ENCODE measurements at regions of chr7 and their contacts with region 1.

Region 1: GRCh38 chr7:150753826-150754603 is 16.8 kb downstream of the GIMAP5 start:
- DNase-seq: peak; percentile 43
- ATAC-seq: peak; percentile 69
- H3K4me3 Mint-ChIP-seq: peak overlapping the region; percentile 21
- H3K27ac Mint-ChIP-seq: peak overlapping the region; percentile 92
- H3K4me1 Mint-ChIP-seq: peaks cover 70% of the 10 kb centered on the region
- H3K27me3 Mint-ChIP-seq: no peaks in the 10 kb centered on the region

Region 2: GRCh38 chr7:150368096-150368883 is 385.7 kb before region 1 on chr7 and contains the start of gene REPIN1:
- CTCF ChIA-PET with region 1: interaction called, 3 read pairs
- POLR2A ChIA-PET with region 1: interaction called, 7 read pairs
- intact Hi-C with region 1: loop called in 1 of 2 experiments (anchors 5 kb)
- DNase-seq: peak; percentile 88
- ATAC-seq: peak; percentile 63
- H3K4me3 Mint-ChIP-seq: peak within 1 kb of the TSS; percentile 90
- H3K27ac Mint-ChIP-seq: peak within 1 kb of the TSS; percentile 97
- H3K4me1 Mint-ChIP-seq: peaks cover 37% of the 10 kb centered on the region
- H3K27me3 Mint-ChIP-seq: no peaks in the 10 kb centered on the region
- total RNA-seq, gene REPIN1: 48.2 to 55.6 TPM

Region 3: GRCh38 chr7:150448789-150449147 is 305.2 kb before region 1 on chr7:
- CTCF ChIA-PET with region 1: interaction called, 69 read pairs
- POLR2A ChIA-PET with region 1: interaction called, 15 read pairs
- intact Hi-C with region 1: loop called (anchors 1 kb)
- DNase-seq: peak; percentile 95
- ATAC-seq: peak; percentile 41
- H3K4me3 Mint-ChIP-seq: peak overlapping the region; percentile 91
- H3K27ac Mint-ChIP-seq: peak overlapping the region; percentile 96
- H3K4me1 Mint-ChIP-seq: peaks cover 51% of the 10 kb centered on the region
- H3K27me3 Mint-ChIP-seq: no peaks in the 10 kb centered on the region

Region 4: GRCh38 chr7:150567169-150567568 is 186.8 kb before region 1 on chr7 and contains the start of gene GIMAP4:
- CTCF ChIA-PET with region 1: no interaction called
- POLR2A ChIA-PET with region 1: interaction called, 4 read pairs
- intact Hi-C with region 1: loop called (anchors 2 kb)
- DNase-seq: peak; percentile 45
- ATAC-seq: peak; percentile 50
- H3K4me3 Mint-ChIP-seq: peak within 1 kb of the TSS; percentile 89
- H3K27ac Mint-ChIP-seq: peak within 1 kb of the TSS; percentile 99
- H3K4me1 Mint-ChIP-seq: peaks cover 67% of the 10 kb centered on the region
- H3K27me3 Mint-ChIP-seq: no peaks in the 10 kb centered on the region
- total RNA-seq, gene GIMAP4: 109 to 135 TPM

Region 5: GRCh38 chr7:150631866-150632864 is 121.8 kb before region 1 on chr7 and contains the start of gene GIMAP6:
- CTCF ChIA-PET with region 1: interaction called, 6 read pairs
- POLR2A ChIA-PET with region 1: no interaction called
- intact Hi-C with region 1: loop called in 1 of 2 experiments (anchors 2 kb)
- DNase-seq: peak; percentile 62
- ATAC-seq: peak; percentile 69
- H3K4me3 Mint-ChIP-seq: peak within 1 kb of the TSS; percentile 95
- H3K27ac Mint-ChIP-seq: peak within 1 kb of the TSS; percentile 97
- H3K4me1 Mint-ChIP-seq: peaks cover 65% of the 10 kb centered on the region
- H3K27me3 Mint-ChIP-seq: no peaks in the 10 kb centered on the region
- total RNA-seq, gene GIMAP6: 21.6 to 25.4 TPM

Region 6: GRCh38 chr7:150685219-150686029 is 68.6 kb before region 1 on chr7 and contains the start of gene GIMAP2:
- CTCF ChIA-PET with region 1: interaction called, 3 read pairs
- POLR2A ChIA-PET with region 1: interaction called, 3 read pairs
- intact Hi-C with region 1: loop called (anchors 1 to 2 kb)
- DNase-seq: peak; percentile 41
- ATAC-seq: peak; percentile 85
- H3K4me3 Mint-ChIP-seq: peak within 1 kb of the TSS; percentile 96
- H3K27ac Mint-ChIP-seq: peak within 1 kb of the TSS; percentile 100
- H3K4me1 Mint-ChIP-seq: peaks cover 75% of the 10 kb centered on the region
- H3K27me3 Mint-ChIP-seq: no peaks in the 10 kb centered on the region
- total RNA-seq, gene GIMAP2: 30.0 to 40.1 TPM

Region 7: GRCh38 chr7:150737265-150738055 is 16.6 kb before region 1 on chr7 and contains the start of gene GIMAP5:
- CTCF ChIA-PET with region 1: interaction called, 23 read pairs
- POLR2A ChIA-PET with region 1: interaction called, 15 read pairs
- intact Hi-C with region 1: loop called (anchors 1 kb)
- DNase-seq: peak; percentile 75
- ATAC-seq: peak; percentile 68
- H3K4me3 Mint-ChIP-seq: peak within 1 kb of the TSS; percentile 86
- H3K27ac Mint-ChIP-seq: peak within 1 kb of the TSS; percentile 98
- H3K4me1 Mint-ChIP-seq: peaks cover 74% of the 10 kb centered on the region
- H3K27me3 Mint-ChIP-seq: no peaks in the 10 kb centered on the region
- total RNA-seq, gene GIMAP5: 47.6 to 53.3 TPM

Measured in activated CD4-positive, alpha-beta T cell treated with anti-CD3 and anti-CD28 coated beads for 36 hours (primary cell).